Activated T-helper 1 cell treated with anti-CD3 and anti-CD28 coated beads, Interleukin-12 subunit alpha, Interleukin-12 subunit beta, Interleukin-2, Interleukin-4 antibody, amounts not matched to agents 30 ng/mL and 10 ng/mL and 1 ng/mL, durations not matched to agents 14 hours and 24 hours and 36 hours (primary cell): ENCODE measurements at regions of chr11 and their contacts with region 1.

Region 1: DNA sequence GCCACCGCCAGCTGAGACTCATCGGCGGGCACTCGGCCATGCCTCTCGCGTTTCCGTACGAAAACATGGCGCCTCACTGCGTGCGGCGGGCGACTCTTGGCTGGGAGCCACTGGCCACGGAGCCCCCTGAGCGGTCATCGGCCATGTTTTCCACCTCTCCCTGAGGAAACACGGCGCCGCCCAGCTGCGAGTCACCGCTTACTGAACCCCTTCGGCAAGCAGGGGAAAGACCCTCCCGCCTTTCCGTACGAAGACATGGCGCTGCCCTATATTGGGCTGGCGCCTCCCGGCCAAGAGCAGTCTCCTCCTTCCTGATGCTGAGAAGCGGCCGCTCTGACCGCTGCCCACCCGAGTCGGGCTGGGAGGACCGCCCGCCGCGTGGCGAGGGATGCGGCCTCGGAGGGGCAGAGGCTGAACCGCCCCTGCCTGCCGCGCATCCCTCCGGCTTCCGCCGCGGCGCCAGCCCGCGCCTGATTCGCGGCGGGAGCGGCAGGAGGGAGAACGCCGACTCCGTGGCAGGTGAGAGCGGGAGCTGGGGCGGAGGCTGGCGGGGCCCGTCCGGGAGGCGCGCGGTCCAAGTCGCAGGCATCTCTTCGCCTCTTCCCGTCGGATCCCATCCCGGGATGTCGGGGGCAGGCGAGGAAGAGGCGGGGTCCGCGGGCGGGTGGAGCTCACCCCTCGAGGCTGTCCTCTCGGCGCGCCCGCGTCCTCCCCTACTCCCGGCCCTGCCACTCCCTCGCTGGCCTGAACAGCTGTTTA is at the start of gene TCP11L1:
- DNase-seq: peak; percentile 72
- H3K4me3 Mint-ChIP-seq: peak within 1 kb of the TSS; percentile 93
- H3K27ac Mint-ChIP-seq: peak within 1 kb of the TSS; percentile 90
- H3K4me1 Mint-ChIP-seq: peaks cover 20% of the 10 kb centered on the region
- H3K27me3 Mint-ChIP-seq: peaks cover 13% of the 10 kb centered on the region
- total RNA-seq, gene TCP11L1: 15.0 and 16.1 TPM in 2 replicates

Region 2: GRCh38 chr11:32148881-32149389 is 890.5 kb before region 1 on chr11:
- intact Hi-C with region 1: no loop called
- DNase-seq: no peak
- H3K4me3 Mint-ChIP-seq: no peak overlapping the region
- H3K27ac Mint-ChIP-seq: no peak overlapping the region
- H3K4me1 Mint-ChIP-seq: no peaks in the 10 kb centered on the region
- H3K27me3 Mint-ChIP-seq: peaks cover 5% of the 10 kb centered on the region

Region 3: DNA sequence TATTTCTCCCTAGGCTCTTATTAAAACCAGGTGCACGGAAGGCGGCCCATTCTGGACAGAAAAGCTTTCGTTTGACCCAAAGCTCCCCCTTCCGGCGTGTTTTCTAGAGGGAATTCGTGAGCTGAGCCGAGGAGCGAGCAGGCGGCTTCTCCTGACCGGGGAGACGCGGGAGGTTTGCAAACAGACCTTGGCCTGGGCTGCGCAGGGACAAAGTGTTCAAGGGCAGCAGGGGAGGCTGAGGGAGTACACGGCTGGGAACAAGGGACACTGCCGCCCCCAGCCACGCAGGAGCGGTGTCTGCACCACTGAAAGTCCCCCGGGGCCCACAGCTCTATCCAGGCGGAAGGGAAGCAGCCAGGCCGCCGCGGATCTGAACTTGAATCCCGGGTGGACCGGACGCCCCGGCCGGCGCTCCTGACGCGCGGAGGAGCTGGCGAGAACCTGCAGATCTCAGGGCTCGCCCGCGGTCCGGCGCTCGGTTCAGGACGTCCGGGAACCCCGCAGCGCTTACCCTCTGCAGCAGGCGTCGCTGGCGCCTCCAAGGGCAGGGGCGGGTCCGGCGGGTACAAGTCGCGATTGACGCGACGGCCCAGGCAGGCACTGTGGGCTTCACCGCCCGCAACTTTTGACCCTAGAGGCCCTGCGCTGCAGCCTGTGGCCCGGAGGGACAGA is 706.0 kb before region 1 on chr11:
- intact Hi-C with region 1: no loop called
- DNase-seq: peak; percentile 3
- H3K4me3 Mint-ChIP-seq: peak overlapping the region; percentile 49
- H3K27ac Mint-ChIP-seq: no peak overlapping the region
- H3K4me1 Mint-ChIP-seq: no peaks in the 10 kb centered on the region
- H3K27me3 Mint-ChIP-seq: peaks cover 25% of the 10 kb centered on the region

Region 4: GRCh38 chr11:32884770-32885384 is 154.6 kb before region 1 on chr11:
- intact Hi-C with region 1: loop called (anchors 2 kb)
- DNase-seq: no peak
- H3K4me3 Mint-ChIP-seq: no peak overlapping the region
- H3K27ac Mint-ChIP-seq: no peak overlapping the region
- H3K4me1 Mint-ChIP-seq: no peaks in the 10 kb centered on the region
- H3K27me3 Mint-ChIP-seq: peaks cover 15% of the 10 kb centered on the region

Region 5: DNA sequence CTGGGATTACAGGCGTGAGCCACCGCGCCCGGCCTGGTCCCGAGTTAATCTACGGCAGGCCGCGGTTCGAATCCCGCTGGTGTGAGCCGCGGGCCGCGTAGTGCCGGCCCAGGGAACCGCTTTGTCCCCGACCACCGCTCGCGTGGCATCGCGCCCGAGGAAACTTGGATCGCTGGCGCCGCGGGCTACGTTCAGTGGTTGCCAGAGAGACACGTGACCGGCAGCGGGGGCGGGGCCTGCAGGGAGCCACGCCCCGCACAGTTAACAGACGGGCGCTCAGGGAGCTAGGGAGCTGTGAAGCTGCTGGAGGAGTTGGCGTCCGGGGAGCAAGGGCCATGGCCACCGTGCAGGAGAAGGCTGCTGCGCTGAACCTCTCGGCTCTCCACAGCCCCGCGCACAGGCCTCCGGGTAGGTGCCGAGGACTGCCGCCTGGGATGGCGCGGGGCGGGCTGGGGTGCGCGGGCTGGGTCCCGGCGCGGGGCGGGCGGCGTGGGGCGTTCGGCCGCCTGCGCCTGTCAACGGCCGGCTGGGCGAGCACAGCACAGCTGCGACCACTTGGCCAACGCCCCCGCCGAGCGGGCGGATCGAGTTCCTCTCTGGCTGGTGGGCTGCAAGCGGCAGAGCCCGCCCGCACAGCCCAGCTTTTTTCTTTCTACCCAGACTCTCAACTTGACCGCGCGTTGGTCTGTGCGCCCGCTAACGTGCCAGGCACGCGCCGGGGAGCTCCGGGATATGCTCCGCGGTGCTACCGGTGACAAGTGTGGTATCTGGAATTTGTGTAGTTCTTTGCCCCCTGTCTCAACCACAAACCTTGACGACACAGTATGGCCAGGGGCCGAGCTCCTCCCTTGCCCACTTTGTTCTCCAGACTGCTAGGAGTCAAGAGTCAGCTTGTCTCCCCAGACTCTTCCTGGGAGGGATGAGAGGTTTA is 23.6 kb before region 1 on chr11 and contains the start of gene DEPDC7:
- intact Hi-C with region 1: loop called (anchors 1 kb)
- DNase-seq: peak; percentile 66
- H3K4me3 Mint-ChIP-seq: peak within 1 kb of the TSS; percentile 79
- H3K27ac Mint-ChIP-seq: no peak within 1 kb of the TSS
- H3K4me1 Mint-ChIP-seq: peaks cover 18% of the 10 kb centered on the region
- H3K27me3 Mint-ChIP-seq: peaks cover 41% of the 10 kb centered on the region
- total RNA-seq, gene DEPDC7: 0.26 and 0.61 TPM in 2 replicates

Region 6: GRCh38 chr11:33161120-33162005 is 121.9 kb after region 1 on chr11 and contains the start of gene CSTF3:
- intact Hi-C with region 1: loop called (anchors 1 kb)
- DNase-seq: peak; percentile 91
- H3K4me3 Mint-ChIP-seq: peak within 1 kb of the TSS; percentile 100
- H3K27ac Mint-ChIP-seq: peak within 1 kb of the TSS; percentile 100
- H3K4me1 Mint-ChIP-seq: peaks cover 40% of the 10 kb centered on the region
- H3K27me3 Mint-ChIP-seq: no peaks in the 10 kb centered on the region
- total RNA-seq, gene CSTF3: 34.9 and 36.5 TPM in 2 replicates

Region 7: DNA sequence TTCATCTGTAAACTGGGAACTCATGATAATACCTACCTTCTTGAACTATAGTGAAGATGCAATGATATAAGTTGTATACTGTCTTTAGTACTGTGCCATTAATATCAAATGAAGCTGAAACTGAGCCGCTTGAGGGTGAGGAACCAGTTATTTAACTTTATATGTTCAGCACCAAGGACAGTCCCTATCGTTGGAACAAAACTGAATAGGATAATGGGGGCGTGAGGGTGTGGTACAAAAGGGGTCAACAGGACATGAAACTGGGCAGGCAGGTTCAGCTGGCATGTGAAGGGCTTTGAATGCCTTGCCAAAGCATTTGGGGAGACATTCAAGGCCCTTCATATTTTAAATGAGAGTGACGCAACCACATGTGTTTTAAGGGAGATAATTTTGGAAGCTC is 548.6 kb after region 1 on chr11:
- intact Hi-C with region 1: no loop called
- DNase-seq: no peak
- H3K4me3 Mint-ChIP-seq: no peak overlapping the region
- H3K27ac Mint-ChIP-seq: no peak overlapping the region
- H3K4me1 Mint-ChIP-seq: no peaks in the 10 kb centered on the region
- H3K27me3 Mint-ChIP-seq: no peaks in the 10 kb centered on the region

Region 8: DNA sequence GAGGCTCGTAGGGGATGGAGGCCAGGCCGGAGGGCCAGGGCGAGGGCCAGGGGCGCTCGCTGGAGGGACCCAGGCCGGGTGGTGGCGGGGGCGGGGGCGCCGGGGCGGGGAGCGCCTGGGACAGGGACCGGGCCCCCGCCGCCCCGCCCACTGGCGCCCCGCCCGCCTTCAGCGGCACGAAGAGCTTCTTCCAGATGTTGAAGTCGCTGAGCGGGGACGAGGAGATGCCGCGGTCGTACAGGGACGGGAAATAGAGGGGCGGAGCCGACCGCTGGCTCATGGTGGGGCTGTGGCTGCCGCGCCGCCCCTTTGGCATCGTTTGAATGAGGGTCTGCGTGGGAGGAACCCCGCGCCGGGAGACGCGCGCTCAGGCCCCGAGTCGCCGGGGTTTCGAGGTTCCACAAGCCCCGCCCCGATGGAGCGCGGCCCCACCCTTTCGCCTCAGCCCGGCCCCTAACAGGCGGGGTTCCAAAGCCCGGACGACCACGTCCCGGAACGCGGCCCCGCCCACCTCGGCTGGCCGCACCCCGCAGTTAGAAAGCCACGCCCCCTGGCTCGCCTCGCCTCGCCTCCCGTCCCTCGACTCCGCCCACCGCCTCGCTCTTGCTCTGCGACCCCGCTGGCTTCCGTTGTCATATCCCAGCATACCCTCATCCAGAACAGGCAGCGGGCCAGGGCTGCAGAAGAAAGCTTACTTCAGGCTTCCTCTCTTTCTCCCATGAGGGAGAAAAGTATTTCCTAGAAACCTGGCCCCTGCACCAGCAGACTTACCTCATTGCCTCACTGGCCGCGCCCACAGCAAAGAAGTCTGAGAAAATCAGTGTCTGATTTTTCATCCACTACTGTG is 661.2 kb after region 1 on chr11 and contains the start of gene C11orf91:
- intact Hi-C with region 1: loop called (anchors 2 kb)
- DNase-seq: peak; percentile 94
- H3K4me3 Mint-ChIP-seq: peak within 1 kb of the TSS; percentile 84
- H3K27ac Mint-ChIP-seq: peak within 1 kb of the TSS; percentile 78
- H3K4me1 Mint-ChIP-seq: peaks cover 29% of the 10 kb centered on the region
- H3K27me3 Mint-ChIP-seq: peaks cover 22% of the 10 kb centered on the region
- total RNA-seq, gene C11orf91: 0.23 TPM in 1 of 2 replicates, not detected in the other